IMR-90 (cell line): ENCODE measurements at regions of chr5 and their contacts with region 1.

Region 1: DNA sequence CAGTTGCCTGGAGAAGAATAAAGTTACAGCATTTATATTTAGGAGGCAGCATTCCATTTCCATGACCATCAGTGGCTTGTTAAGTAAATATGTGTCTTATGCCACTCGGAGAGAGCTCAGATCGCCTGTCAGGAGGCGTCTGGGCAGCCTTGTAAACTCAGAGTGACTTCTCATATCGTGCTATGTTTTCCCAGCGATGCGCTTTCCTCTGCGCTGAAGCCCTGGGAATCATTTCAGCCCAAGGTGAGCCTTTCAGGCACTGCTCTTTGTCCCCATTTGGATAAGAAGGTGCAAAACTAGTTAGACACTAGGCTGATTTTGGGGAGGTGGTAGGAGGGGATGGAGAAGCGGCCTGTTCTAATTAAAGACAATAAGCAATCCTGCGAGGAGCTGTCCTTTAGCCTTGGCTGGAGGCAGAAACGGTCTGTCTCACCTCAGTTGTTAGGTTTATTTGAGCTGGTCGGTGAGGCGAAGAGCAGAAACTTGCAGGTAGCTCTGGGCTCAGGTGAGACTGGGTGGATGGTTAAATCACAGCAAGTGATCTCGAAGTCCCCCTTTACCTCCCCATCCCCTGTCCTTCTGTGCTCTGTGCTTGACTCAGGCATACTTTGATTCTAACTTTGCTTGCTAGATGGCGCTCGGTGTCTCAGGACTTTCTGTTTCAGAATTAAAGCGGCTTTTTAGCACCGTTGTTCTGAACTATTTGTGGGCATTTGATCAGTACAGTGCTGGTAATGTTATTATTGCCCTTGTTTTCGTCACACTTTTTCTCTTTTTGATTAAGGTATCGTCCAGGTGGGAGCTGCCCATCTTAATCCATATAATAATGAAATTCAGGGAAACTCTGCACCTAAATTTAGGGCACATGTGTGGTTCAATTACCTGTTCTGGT is 24.6 kb downstream of the NR2F1 start:
- DNase-seq: peak; percentile 89
- ATAC-seq: peak; percentile 75
- H3K4me3 ChIP-seq: peak overlapping the region; percentile 41
- H3K27ac ChIP-seq: peak overlapping the region; percentile 38; the same call in 1 of the 2 replicates
- H3K4me1 ChIP-seq: peaks cover 5% of the 10 kb centered on the region
- H3K27me3 ChIP-seq: peaks cover 18% of the 10 kb centered on the region
- CTCF ChIP-seq: peak; percentile 64
- POLR2A ChIP-seq: no peak
- RAD21 ChIP-seq: peak; percentile 69

Region 2: DNA sequence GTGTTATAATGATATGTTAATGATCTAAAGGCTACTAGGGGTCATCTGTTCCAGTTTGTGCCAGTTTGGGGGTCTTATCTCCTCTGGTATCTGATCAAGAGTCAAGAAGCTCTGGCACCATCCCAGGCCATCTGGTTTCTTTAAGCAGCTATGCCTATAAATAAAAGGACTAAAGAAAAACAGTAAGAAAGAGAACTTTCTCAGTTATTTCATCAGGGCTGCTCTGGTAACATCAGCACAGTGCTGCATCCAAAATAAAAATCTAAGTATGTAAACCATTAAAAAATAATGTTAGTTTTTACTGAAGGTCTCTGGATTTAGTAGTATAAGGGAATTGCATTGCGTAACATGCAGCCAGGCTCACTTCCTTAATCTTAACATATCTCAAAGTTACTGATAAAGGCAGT is 211.6 kb before region 1 on chr5:
- CTCF ChIA-PET with region 1: no interaction called
- POLR2A ChIA-PET with region 1: no interaction called
- dilution Hi-C with region 1: no loop called
- in situ Hi-C with region 1: no loop called
- intact Hi-C with region 1: no loop called
- DNase-seq: peak; percentile 34
- ATAC-seq: peak; percentile 62
- H3K4me3 ChIP-seq: no peak overlapping the region
- H3K27ac ChIP-seq: no peak overlapping the region; the same call in 1 of the 2 replicates
- H3K4me1 ChIP-seq: no peaks in the 10 kb centered on the region; the same call in 1 of the 2 replicates
- H3K27me3 ChIP-seq: no peaks in the 10 kb centered on the region
- CTCF ChIP-seq: no peak
- POLR2A ChIP-seq: no peak
- RAD21 ChIP-seq: no peak

Region 3: DNA sequence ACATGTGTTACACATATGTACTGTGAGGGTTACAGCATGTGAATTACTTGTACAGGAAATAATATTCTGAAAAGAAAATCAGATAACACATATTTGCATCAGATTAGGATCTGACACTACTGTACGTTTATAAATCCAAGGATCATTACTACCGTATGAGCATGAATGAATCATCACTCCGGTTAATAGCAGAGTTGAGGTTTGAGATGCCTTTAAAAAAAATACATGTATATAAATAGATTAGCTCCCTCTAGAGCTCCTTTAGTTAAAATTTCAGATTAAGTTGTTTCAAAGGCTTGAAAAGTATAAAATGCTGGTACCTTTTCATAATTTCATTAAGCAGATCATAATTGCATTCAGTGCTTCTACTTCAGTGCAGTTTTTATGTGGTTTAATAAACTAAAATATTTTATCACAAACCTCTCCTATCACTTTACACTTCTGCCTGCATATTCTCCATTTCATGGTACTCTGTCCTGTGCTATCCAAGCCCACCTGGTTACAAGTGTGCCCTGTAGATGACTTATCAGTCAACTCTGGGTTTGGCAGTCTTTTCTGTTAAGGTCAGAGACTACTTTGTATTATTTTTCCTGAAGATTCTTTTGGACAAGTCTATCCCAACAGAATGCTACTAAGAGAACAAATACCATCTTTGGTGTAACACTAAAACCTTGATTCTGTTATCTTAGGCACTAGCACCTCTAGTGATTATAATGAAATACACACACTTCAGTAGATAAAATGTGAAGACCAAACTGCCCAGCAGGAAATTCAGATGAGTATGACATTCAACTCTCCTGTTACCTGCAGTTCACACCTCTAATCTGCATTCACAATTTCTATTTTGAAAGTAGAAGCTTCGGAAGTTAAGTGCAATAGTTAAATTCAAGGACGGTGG is 181.8 kb after region 1 on chr5:
- CTCF ChIA-PET with region 1: interaction called, 9 read pairs
- POLR2A ChIA-PET with region 1: no interaction called
- dilution Hi-C with region 1: no loop called
- in situ Hi-C with region 1: loop called (anchors 5 kb)
- intact Hi-C with region 1: loop called (anchors 2 kb)
- DNase-seq: peak; percentile 88
- ATAC-seq: peak; percentile 76
- H3K4me3 ChIP-seq: no peak overlapping the region
- H3K27ac ChIP-seq: no peak overlapping the region
- H3K4me1 ChIP-seq: peaks cover 4% of the 10 kb centered on the region; the same call in 1 of the 2 replicates
- H3K27me3 ChIP-seq: no peaks in the 10 kb centered on the region
- CTCF ChIP-seq: peak; percentile 30; the same call in 1 of the 2 replicates
- POLR2A ChIP-seq: no peak
- RAD21 ChIP-seq: no peak; the same call in 1 of the 2 replicates

Region 4: GRCh38 chr5:93894601-93895354 is 287.2 kb after region 1 on chr5:
- CTCF ChIA-PET with region 1: no interaction called
- POLR2A ChIA-PET with region 1: no interaction called
- dilution Hi-C with region 1: no loop called
- in situ Hi-C with region 1: no loop called
- intact Hi-C with region 1: loop called (anchors 5 kb)
- DNase-seq: peak; percentile 21
- ATAC-seq: peak; percentile 46; the same call in 1 of the 2 replicates
- H3K4me3 ChIP-seq: no peak overlapping the region
- H3K27ac ChIP-seq: no peak overlapping the region
- H3K4me1 ChIP-seq: no peaks in the 10 kb centered on the region
- H3K27me3 ChIP-seq: no peaks in the 10 kb centered on the region
- CTCF ChIP-seq: peak; percentile 45
- POLR2A ChIP-seq: no peak
- RAD21 ChIP-seq: no peak

Region 5: DNA sequence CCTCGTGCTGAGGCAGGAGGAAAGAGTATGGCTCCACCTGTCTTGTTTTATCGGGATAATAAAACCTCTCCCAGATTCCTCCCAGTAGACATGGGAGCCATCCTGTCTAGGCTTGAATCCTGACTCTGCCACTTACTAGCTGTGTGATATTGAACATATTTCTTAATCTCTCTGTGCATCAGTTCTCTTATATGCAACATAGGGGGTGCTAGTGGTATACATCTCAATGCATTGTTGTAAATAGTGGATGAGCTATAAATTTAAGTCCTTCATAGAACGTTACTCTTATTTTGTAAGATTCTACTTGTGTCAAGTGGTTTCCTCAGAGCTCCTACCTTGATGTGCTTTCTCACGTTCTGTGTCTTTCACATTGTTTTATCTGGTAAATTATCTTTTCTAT is 551.5 kb after region 1 on chr5:
- CTCF ChIA-PET with region 1: no interaction called
- POLR2A ChIA-PET with region 1: no interaction called
- dilution Hi-C with region 1: no loop called
- in situ Hi-C with region 1: no loop called
- intact Hi-C with region 1: loop called (anchors 5 kb)
- DNase-seq: no peak
- ATAC-seq: no peak
- H3K4me3 ChIP-seq: no peak overlapping the region
- H3K27ac ChIP-seq: no peak overlapping the region
- H3K4me1 ChIP-seq: peaks cover 2% of the 10 kb centered on the region
- H3K27me3 ChIP-seq: no peaks in the 10 kb centered on the region
- CTCF ChIP-seq: peak; percentile 29
- POLR2A ChIP-seq: no peak
- RAD21 ChIP-seq: peak; percentile 42; the same call in 1 of the 2 replicates

Region 6: DNA sequence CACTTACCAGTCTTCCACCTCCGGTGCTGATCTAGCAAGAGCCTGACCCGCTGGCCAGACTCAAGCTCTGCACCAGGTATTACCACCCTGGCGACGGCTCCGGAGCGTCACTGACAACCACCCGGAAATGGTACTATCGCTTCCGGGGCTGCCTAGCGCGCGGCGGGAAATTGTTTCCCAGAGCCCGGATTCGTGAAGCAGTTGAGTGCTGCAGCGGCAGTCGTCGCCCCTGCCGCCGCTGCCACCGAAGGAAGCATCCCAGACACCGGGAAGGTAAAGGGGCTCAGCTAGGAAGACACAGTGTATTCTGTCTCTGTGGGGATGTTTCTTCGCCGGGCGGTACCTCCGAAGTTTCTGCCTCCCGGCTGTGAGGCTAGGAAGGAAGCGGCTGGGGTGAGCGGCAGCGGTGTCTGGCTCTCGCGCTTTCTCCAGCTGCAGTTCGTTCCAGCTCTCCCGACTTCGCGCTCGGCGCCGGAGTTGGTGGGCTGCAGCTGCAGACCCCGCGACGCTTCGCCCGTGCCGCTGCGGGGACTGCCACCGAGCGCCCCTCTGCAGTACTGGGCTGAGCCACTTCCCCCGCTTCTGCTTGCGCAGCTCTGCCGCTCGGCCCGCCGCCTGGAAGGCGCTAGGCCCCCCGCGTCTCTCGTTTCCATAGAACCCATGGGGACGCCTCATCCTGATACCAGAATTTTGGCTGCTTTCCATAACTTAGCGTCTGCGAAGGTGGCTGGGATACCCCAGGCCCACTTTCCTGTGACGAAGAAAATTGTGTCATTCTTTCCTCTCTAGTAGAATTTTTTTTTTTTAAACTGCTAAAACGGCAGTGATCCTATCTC is 1011.1 kb after region 1 on chr5 and contains the starts of genes KIAA0825 and SLF1:
- CTCF ChIA-PET with region 1: no interaction called
- POLR2A ChIA-PET with region 1: no interaction called
- dilution Hi-C with region 1: no loop called
- in situ Hi-C with region 1: no loop called
- intact Hi-C with region 1: loop called (anchors 10 kb)
- DNase-seq: peak; percentile 84
- ATAC-seq: peak; percentile 90
- H3K4me3 ChIP-seq: peak within 1 kb of the TSS; percentile 95
- H3K27ac ChIP-seq: peak within 1 kb of the TSS; percentile 64
- H3K4me1 ChIP-seq: no peaks in the 10 kb centered on the region
- H3K27me3 ChIP-seq: no peaks in the 10 kb centered on the region
- CTCF ChIP-seq: no peak; the same call in 1 of the 2 replicates
- POLR2A ChIP-seq: no peak
- RAD21 ChIP-seq: no peak
- total RNA-seq, gene KIAA0825: 1.8 and 3.9 TPM in 2 replicates
- total RNA-seq, gene SLF1: 3.4 and 7.5 TPM in 2 replicates